ENCODE measurements at regions of chr5 and their contacts with region 1.

Region 1: GRCh38 chr5:172770675-172771438 is at the start of gene DUSP1:
- DNase-seq: peak; percentile 97
- CTCF ChIP-seq: peak; percentile 68

Region 2: GRCh38 chr5:172714491-172715421 is 56.1 kb before region 1 on chr5:
- CTCF ChIA-PET with region 1: interaction called, 14 read pairs
- POLR2A ChIA-PET with region 1: interaction called, 7 read pairs
- DNase-seq: peak; percentile 75
- CTCF ChIP-seq: peak; percentile 62

Region 3: GRCh38 chr5:172795318-172795977 is 24.6 kb after region 1 on chr5:
- CTCF ChIA-PET with region 1: interaction called, 57 read pairs
- POLR2A ChIA-PET with region 1: interaction called, 14 read pairs
- DNase-seq: no peak
- CTCF ChIP-seq: no peak

Region 4: GRCh38 chr5:172839669-172840431 is 69.0 kb after region 1 on chr5:
- CTCF ChIA-PET with region 1: interaction called, 10 read pairs
- POLR2A ChIA-PET with region 1: interaction called, 12 read pairs
- DNase-seq: no peak
- CTCF ChIP-seq: no peak

Region 5: GRCh38 chr5:172904643-172905347 is 133.9 kb after region 1 on chr5:
- CTCF ChIA-PET with region 1: interaction called, 11 read pairs
- POLR2A ChIA-PET with region 1: interaction called, 11 read pairs
- DNase-seq: no peak
- CTCF ChIP-seq: no peak

Region 6: GRCh38 chr5:172981931-172982330 is 211.1 kb after region 1 on chr5:
- CTCF ChIA-PET with region 1: no interaction called
- POLR2A ChIA-PET with region 1: no interaction called
- DNase-seq: no peak
- CTCF ChIP-seq: no peak

Measured in GM10248 (cell line).